ENCODE measurements at regions of chr17 and their contacts with region 1.

Region 1: GRCh38 chr17:28861393-28862203 is 6.8 kb downstream of the ERAL1 start:
- DNase-seq: no peak
- H3K4me3 Mint-ChIP-seq: no peak overlapping the region
- H3K27ac Mint-ChIP-seq: no peak overlapping the region
- H3K4me1 Mint-ChIP-seq: peaks cover 7% of the 10 kb centered on the region
- H3K27me3 Mint-ChIP-seq: no peaks in the 10 kb centered on the region

Region 2: GRCh38 chr17:28849281-28849680 is 12.3 kb before region 1 on chr17:
- CTCF ChIA-PET with region 1: interaction called, 11 read pairs
- POLR2A ChIA-PET with region 1: no interaction called
- DNase-seq: no peak
- H3K4me3 Mint-ChIP-seq: no peak overlapping the region
- H3K27ac Mint-ChIP-seq: no peak overlapping the region
- H3K4me1 Mint-ChIP-seq: peaks cover 11% of the 10 kb centered on the region
- H3K27me3 Mint-ChIP-seq: no peaks in the 10 kb centered on the region